ENCODE measurements at regions of chr1 and their contacts with region 1.

Region 1: DNA sequence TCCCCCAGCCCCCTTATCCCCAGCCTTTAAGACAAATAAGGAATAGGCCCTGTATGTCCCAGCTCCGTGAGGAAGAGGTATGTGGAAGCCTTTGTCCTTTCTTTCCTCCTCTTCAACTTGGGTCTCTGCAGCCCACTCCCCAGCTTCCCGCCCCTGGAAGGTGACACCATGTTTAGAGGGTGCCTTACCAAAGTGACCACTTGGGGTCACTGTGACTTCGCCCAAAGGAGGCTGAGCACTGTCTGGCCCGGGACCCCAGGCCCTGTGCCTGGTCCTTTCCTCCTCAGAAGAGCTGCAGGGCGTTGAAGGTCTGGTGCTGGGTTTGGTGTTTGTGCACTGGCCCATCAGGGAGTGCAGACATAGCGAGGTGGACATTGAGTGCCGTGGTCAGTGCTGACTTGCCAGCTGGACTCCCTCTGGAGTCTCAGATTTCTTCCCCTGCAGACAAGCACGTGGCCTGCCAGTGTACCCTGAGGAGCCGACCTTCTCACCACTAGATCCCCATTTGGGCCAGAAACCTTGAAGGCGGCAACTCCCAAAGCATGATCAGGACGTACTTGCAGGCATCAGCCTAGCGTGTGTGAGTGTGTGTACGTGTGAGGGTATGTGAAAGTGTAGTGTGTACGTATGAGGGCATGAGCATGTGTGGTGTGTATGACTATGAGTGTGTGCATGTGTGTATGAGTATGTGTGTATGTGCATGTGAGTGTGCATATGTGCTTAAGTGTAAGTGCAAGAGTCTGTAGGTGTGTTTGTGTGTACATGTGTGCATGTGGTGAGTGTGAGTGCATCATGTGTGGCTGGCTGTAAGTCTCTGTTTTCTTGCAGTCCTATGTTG is 181.4 kb upstream of the KIAA0040 start:
- DNase-seq: peak; percentile 75
- ATAC-seq: peak; percentile 94
- H3K4me3 Mint-ChIP-seq: no peak overlapping the region
- H3K27ac Mint-ChIP-seq: no peak overlapping the region
- H3K4me1 Mint-ChIP-seq: peaks cover 6% of the 10 kb centered on the region
- H3K27me3 Mint-ChIP-seq: peaks cover 7% of the 10 kb centered on the region; the same call in 1 of the 2 replicates
- CTCF ChIP-seq: peak; percentile 82

Region 2: GRCh38 chr1:175388285-175388684 is 14.3 kb after region 1 on chr1:
- CTCF ChIA-PET with region 1: interaction called, 13 read pairs
- POLR2A ChIA-PET with region 1: no interaction called
- DNase-seq: no peak
- ATAC-seq: no peak; the same call in 1 of the 2 replicates
- H3K4me3 Mint-ChIP-seq: no peak overlapping the region
- H3K27ac Mint-ChIP-seq: no peak overlapping the region
- H3K4me1 Mint-ChIP-seq: peaks cover 33% of the 10 kb centered on the region
- H3K27me3 Mint-ChIP-seq: no peaks in the 10 kb centered on the region
- CTCF ChIP-seq: no peak

Region 3: GRCh38 chr1:175548774-175549173 is 174.8 kb after region 1 on chr1:
- CTCF ChIA-PET with region 1: no interaction called
- POLR2A ChIA-PET with region 1: no interaction called
- DNase-seq: no peak
- ATAC-seq: no peak
- H3K4me3 Mint-ChIP-seq: no peak overlapping the region
- H3K27ac Mint-ChIP-seq: no peak overlapping the region
- H3K4me1 Mint-ChIP-seq: no peaks in the 10 kb centered on the region
- H3K27me3 Mint-ChIP-seq: peaks cover 7% of the 10 kb centered on the region
- CTCF ChIP-seq: no peak

Region 4: GRCh38 chr1:175628548-175629317 is 254.7 kb after region 1 on chr1:
- CTCF ChIA-PET with region 1: interaction called, 10 read pairs
- POLR2A ChIA-PET with region 1: no interaction called
- DNase-seq: no peak
- ATAC-seq: no peak
- H3K4me3 Mint-ChIP-seq: no peak overlapping the region
- H3K27ac Mint-ChIP-seq: no peak overlapping the region
- H3K4me1 Mint-ChIP-seq: peaks cover 8% of the 10 kb centered on the region
- H3K27me3 Mint-ChIP-seq: no peaks in the 10 kb centered on the region
- CTCF ChIP-seq: no peak

Region 5: DNA sequence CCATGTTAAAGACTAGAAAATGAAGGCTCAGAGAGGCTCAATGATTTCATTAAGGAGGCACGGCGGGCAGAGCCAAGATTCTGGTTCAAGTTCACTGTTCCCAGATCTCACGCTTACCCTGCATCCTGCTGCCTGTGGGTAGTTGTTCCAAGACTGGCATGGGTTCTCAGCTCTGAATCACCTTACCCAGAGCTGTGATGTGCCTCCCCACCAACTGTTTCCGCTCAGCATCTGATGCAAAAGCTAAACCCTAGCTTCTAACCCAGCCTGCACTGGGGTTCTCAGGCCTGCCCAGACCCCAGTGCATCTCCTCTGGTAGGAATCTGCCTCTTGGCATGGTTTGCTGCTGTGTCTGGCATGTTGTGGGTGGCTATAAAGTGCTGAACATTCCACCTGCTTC is 357.6 kb after region 1 on chr1:
- CTCF ChIA-PET with region 1: no interaction called
- POLR2A ChIA-PET with region 1: no interaction called
- DNase-seq: no peak
- ATAC-seq: no peak
- H3K4me3 Mint-ChIP-seq: no peak overlapping the region
- H3K27ac Mint-ChIP-seq: no peak overlapping the region
- H3K4me1 Mint-ChIP-seq: no peaks in the 10 kb centered on the region
- H3K27me3 Mint-ChIP-seq: peaks cover 5% of the 10 kb centered on the region; the same call in 1 of the 2 replicates
- CTCF ChIP-seq: no peak

Region 6: GRCh38 chr1:175742790-175743459 is 368.9 kb after region 1 on chr1:
- CTCF ChIA-PET with region 1: interaction called, 19 read pairs
- POLR2A ChIA-PET with region 1: no interaction called
- DNase-seq: peak; percentile 59
- ATAC-seq: peak; percentile 89
- H3K4me3 Mint-ChIP-seq: peak overlapping the region; percentile 59
- H3K27ac Mint-ChIP-seq: no peak overlapping the region
- H3K4me1 Mint-ChIP-seq: peaks cover 14% of the 10 kb centered on the region
- H3K27me3 Mint-ChIP-seq: peaks cover 33% of the 10 kb centered on the region
- CTCF ChIP-seq: no peak

Region 7: DNA sequence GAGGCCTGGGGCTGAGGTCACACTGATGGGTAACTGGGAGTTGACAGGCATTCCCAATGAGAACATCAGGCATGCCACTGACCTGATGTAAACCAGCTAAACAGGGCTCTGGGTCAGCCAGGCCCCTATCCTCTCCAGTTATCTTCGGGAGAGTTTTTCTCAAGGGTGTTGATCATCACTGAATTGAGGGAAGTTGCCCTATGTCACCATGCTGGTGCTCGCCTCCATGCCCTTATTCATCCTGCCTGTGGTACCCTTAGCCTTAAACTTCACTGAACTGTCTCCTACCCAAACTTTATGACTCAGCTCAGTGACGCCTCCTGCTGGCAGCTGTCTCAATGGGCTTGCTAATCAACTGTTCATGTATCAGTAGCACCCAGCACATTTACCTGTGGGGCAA is 450.1 kb after region 1 on chr1:
- CTCF ChIA-PET with region 1: interaction called, 18 read pairs
- POLR2A ChIA-PET with region 1: no interaction called
- DNase-seq: peak; percentile 88
- ATAC-seq: peak; percentile 97
- H3K4me3 Mint-ChIP-seq: no peak overlapping the region
- H3K27ac Mint-ChIP-seq: no peak overlapping the region
- H3K4me1 Mint-ChIP-seq: peaks cover 5% of the 10 kb centered on the region
- H3K27me3 Mint-ChIP-seq: no peaks in the 10 kb centered on the region; the same call in 1 of the 2 replicates
- CTCF ChIP-seq: peak; percentile 65; the same call in 1 of the 2 replicates

Region 8: GRCh38 chr1:175887981-175888433 is 514.0 kb after region 1 on chr1:
- CTCF ChIA-PET with region 1: interaction called, 14 read pairs
- POLR2A ChIA-PET with region 1: no interaction called
- DNase-seq: peak; percentile 87
- ATAC-seq: peak; percentile 98
- H3K4me3 Mint-ChIP-seq: peak overlapping the region; percentile 58
- H3K27ac Mint-ChIP-seq: no peak overlapping the region
- H3K4me1 Mint-ChIP-seq: peaks cover 15% of the 10 kb centered on the region
- H3K27me3 Mint-ChIP-seq: peaks cover 96% of the 10 kb centered on the region
- CTCF ChIP-seq: peak; percentile 83